ENCODE measurements at regions of chr4 and their contacts with region 1.

Region 1: GRCh38 chr4:187158003-187158402 is 434.3 kb upstream of the FAT1 start:
- DNase-seq: no peak
- ATAC-seq: no peak
- H3K4me3 ChIP-seq: no peak overlapping the region
- H3K4me3 Mint-ChIP-seq: no peak overlapping the region
- H3K27ac ChIP-seq: no peak overlapping the region
- H3K27ac Mint-ChIP-seq: no peak overlapping the region
- H3K4me1 ChIP-seq: no peaks in the 10 kb centered on the region
- H3K4me1 Mint-ChIP-seq: no peaks in the 10 kb centered on the region
- H3K27me3 ChIP-seq: no peaks in the 10 kb centered on the region
- H3K27me3 Mint-ChIP-seq: no peaks in the 10 kb centered on the region

Region 2: GRCh38 chr4:187184508-187184907 is 26.5 kb after region 1 on chr4:
- CTCF ChIA-PET with region 1: no interaction called
- POLR2A ChIA-PET with region 1: no interaction called
- intact Hi-C with region 1: loop called in 1 of 2 experiments (anchors 2 kb)
- DNase-seq: no peak
- ATAC-seq: no peak
- H3K4me3 ChIP-seq: no peak overlapping the region
- H3K4me3 Mint-ChIP-seq: no peak overlapping the region
- H3K27ac ChIP-seq: no peak overlapping the region
- H3K27ac Mint-ChIP-seq: no peak overlapping the region
- H3K4me1 ChIP-seq: no peaks in the 10 kb centered on the region
- H3K4me1 Mint-ChIP-seq: no peaks in the 10 kb centered on the region
- H3K27me3 ChIP-seq: no peaks in the 10 kb centered on the region
- H3K27me3 Mint-ChIP-seq: peaks cover 0 to 3% (median 0%) of the 10 kb centered on the region in 5 donors

Region 3: GRCh38 chr4:187908079-187908561 is 750.1 kb after region 1 on chr4:
- CTCF ChIA-PET with region 1: no interaction called
- POLR2A ChIA-PET with region 1: no interaction called
- intact Hi-C with region 1: no loop called
- DNase-seq: no peak
- ATAC-seq: no peak
- H3K4me3 ChIP-seq: no peak overlapping the region
- H3K4me3 Mint-ChIP-seq: no peak overlapping the region
- H3K27ac ChIP-seq: no peak overlapping the region
- H3K27ac Mint-ChIP-seq: no peak overlapping the region
- H3K4me1 ChIP-seq: no peaks in the 10 kb centered on the region
- H3K4me1 Mint-ChIP-seq: no peaks in the 10 kb centered on the region
- H3K27me3 ChIP-seq: no peaks in the 10 kb centered on the region
- H3K27me3 Mint-ChIP-seq: no peaks in the 10 kb centered on the region